ENCODE measurements at regions of chr19 and their contacts with region 1.

Region 1: DNA sequence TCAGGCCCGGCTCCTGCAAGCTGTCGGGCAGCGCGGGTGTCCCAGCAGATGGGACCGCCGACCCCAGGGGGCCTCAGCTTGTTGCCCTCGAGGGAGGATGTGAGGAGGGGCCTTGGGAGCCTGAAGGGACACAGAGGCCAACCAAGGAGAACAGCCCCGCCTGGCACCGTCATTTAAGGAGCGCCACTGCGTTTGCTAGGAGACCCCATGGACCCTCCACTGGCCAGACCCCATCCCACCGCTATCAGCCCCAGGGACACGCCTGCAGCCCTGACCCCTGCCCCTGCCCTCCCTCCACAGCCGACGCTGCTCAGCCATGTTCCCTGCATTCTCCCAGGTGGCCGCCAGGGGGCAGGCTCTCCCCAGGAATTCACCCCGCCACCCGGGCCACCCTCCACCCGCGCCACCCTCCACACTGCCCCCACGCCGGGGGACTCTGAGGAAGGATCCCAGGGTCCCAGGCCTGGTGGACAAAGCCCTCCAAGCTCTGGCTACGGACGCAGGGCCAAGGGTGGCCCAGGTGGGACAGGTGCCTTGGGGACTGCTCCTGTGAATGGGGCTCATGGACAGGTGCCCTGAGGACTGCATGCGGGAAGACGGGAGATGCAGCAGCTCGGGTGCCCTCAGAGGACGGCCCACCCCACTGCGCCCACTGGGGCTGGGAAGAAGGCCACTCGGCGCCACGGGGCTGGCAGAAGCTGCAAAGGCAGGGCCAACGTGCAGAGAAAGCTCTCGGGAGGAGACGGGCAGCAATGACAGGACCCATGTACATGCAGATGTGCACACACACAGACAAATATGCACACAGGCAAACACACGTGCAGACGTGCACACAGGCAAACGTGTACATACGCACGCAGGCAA is 34.4 kb downstream of the PIP5K1C start:
- DNase-seq: peak; percentile 48 to 74 (median 66)
- ATAC-seq: peak; percentile 73
- H3K4me3 ChIP-seq: no peak overlapping the region
- H3K27ac ChIP-seq: no peak overlapping the region
- H3K4me1 ChIP-seq: peaks cover 6% of the 10 kb centered on the region
- H3K27me3 ChIP-seq: no peaks in the 10 kb centered on the region
- CTCF ChIP-seq: peak; percentile 82 to 96 (median 94)
- POLR2A ChIP-seq: no peak

Region 2: DNA sequence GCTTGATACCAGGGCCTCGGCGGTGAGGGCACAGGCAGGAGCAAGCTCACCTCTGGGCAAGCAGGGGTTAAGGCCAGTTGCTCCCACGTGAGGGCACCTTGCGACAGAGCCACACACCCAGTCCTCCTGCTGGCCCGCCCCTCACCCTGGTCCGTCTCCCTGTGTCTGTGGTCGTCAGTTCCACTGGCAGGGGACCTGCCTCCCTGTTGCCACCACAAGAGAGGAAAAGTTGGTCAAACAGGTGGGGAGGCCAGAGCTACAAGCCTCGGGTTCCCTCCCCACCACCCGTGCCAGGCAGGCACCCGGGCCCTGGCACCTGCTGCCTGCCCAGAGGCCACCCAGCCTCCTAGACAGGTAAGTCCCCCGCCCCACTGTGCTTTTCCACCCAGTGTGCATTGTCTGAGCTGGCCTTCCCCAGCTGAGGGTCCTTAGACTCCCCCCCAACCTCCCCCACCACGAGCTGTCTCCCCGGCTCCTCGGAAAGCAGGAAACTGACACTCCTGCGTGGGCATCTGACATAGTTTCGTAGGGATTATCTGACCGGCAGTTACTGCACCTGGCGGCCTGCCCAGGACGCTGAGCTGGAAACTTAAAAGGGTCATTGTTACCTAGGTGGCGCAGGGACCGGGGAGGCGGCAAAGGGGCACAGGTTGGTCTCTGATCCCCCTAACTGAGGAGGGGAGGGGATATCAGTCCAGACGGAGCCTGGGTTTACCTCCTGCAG is 42.5 kb after region 1 on chr19 and contains the start of gene TJP3:
- intact Hi-C with region 1: loop called (anchors 5 kb)
- DNase-seq: peak; percentile 69 to 85 (median 80)
- ATAC-seq: peak; percentile 53
- H3K4me3 ChIP-seq: no peak within 1 kb of the TSS
- H3K27ac ChIP-seq: peak within 1 kb of the TSS; percentile 75 to 94 (median 90)
- H3K4me1 ChIP-seq: peaks cover 42% of the 10 kb centered on the region
- H3K27me3 ChIP-seq: no peaks in the 10 kb centered on the region
- CTCF ChIP-seq: no peak
- POLR2A ChIP-seq: peak in 2 of 3 donors; percentile 56 to 69
- total RNA-seq, gene TJP3: 15.8 to 21.4 TPM

Region 3: GRCh38 chr19:3821857-3822364 is 156.0 kb after region 1 on chr19:
- intact Hi-C with region 1: loop called (anchors 5 kb)
- DNase-seq: peak; percentile 51 to 71 (median 66)
- ATAC-seq: peak; percentile 82
- H3K4me3 ChIP-seq: no peak overlapping the region
- H3K27ac ChIP-seq: no peak overlapping the region
- H3K4me1 ChIP-seq: no peaks in the 10 kb centered on the region
- H3K27me3 ChIP-seq: no peaks in the 10 kb centered on the region
- CTCF ChIP-seq: peak; percentile 86 to 98 (median 92)
- POLR2A ChIP-seq: no peak

Measured in body of pancreas (tissue), 4 donors.